ENCODE measurements at regions of chr19 and their contacts with region 1.

Region 1: DNA sequence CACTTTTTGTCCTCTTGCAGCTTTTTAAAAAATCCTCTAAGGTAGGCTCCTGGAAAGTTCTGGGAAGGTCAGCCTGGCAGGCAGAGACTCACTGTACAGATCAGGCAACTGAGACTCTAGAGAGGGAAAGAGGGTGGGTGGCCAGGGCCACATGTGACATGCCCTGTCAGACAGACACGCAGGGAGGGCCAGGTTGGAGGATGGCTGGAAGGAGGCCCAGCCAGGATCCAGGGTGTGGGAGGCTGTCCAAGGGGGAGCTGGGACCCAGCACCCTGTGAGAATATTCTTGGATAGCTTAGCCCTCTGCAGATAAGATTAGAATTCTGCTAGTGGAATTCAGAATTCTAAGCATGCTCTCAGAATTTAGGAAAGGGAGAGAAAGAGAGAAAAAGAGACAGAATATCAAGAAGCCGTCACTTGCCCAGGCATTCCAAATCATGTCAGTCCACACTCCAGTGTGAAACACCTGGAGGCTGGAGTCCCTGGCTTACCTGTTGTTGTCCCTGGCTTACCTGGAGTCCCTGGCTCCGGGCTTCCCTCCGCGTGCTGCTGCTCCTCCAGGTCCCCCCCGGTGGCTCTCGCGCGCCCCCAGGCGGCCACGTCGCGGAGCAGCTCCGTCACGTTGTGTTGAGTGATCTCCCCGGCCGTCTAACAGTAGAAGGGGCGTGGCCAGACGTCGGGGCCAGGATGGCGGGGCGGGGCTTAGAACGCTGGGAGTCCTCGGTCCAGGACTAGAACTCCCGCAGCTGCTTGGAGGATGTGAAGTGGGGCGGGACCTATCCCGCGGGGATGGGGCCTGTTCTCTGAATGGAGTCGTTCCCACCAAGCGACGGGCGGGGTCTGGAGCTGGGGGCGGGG is 2.8 kb upstream of the TNNI3 start:
- DNase-seq: peak; percentile 92
- ATAC-seq: peak; percentile 77
- H3K4me3 ChIP-seq: peak overlapping the region; percentile 67 to 74
- H3K27ac ChIP-seq: peak overlapping the region; percentile 78
- H3K4me1 ChIP-seq: peaks cover 13 to 53% of the 10 kb centered on the region in 2 experiments
- H3K27me3 ChIP-seq: no peaks in the 10 kb centered on the region
- CTCF ChIP-seq: peak; percentile 89 to 97 (median 96)
- POLR2A ChIP-seq: no peak
- RAD21 ChIP-seq: peak; percentile 94

Region 2: GRCh38 chr19:54893406-54893805 is 267.0 kb before region 1 on chr19:
- CTCF ChIA-PET with region 1: no interaction called
- POLR2A ChIA-PET with region 1: no interaction called
- RAD21 ChIA-PET with region 1: no interaction called
- intact Hi-C with region 1: no loop called
- DNase-seq: no peak
- ATAC-seq: peak; percentile 44; the same call in 1 of the 2 replicates
- H3K4me3 ChIP-seq: no peak overlapping the region
- H3K27ac ChIP-seq: no peak overlapping the region
- H3K4me1 ChIP-seq: peaks cover 4 to 8% of the 10 kb centered on the region in 2 experiments; a peak in 3 of 4 replicates
- H3K27me3 ChIP-seq: no peaks in the 10 kb centered on the region
- CTCF ChIP-seq: no peak
- POLR2A ChIP-seq: no peak
- RAD21 ChIP-seq: no peak

Region 3: GRCh38 chr19:55014717-55015116 is 145.6 kb before region 1 on chr19:
- CTCF ChIA-PET with region 1: no interaction called
- POLR2A ChIA-PET with region 1: no interaction called
- RAD21 ChIA-PET with region 1: no interaction called
- intact Hi-C with region 1: no loop called
- DNase-seq: no peak
- ATAC-seq: no peak
- H3K4me3 ChIP-seq: no peak overlapping the region
- H3K27ac ChIP-seq: no peak overlapping the region
- H3K4me1 ChIP-seq: no peaks in the 10 kb centered on the region
- H3K27me3 ChIP-seq: no peaks in the 10 kb centered on the region
- CTCF ChIP-seq: no peak
- POLR2A ChIP-seq: no peak
- RAD21 ChIP-seq: no peak

Region 4: DNA sequence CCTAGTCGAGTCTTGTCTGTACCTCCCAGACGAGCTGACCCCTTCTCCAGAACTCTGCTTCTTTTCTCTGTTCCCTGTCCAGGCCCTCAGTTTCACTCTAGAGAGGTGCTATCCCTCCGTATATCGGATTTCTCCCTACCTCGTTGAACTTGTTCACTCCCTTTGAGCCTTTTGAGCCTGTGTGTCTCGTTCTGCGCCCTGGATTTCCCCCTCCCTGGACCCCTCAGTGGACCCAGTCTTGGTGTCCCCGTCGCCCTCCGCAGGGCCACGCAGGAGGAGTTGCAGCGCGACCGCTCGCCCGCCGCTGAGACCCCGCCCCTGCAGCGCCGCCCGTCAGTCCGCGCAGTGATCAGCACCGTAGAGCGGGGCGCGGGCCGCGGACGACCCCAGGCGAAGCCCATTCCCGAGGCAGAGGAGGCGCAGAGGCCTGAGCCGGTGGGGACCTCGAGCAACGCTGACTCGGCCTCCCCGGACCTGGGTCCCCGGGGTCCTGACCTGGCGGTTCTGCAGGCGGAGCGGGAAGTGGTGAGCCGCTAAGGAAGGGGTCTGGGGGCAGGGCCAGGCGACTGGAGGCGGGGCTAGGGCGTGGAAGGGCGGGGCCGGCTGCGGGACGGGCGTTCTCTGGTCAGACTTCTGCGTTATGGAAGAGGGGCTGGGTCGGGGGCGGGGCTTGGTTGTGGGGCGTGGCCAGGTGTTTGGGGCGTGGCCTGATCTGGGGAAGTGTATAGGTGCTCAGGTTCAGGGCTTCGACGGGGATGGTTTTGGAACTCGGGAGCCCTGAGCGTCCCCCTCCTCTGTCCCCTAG is 79.2 kb before region 1 on chr19:
- CTCF ChIA-PET with region 1: no interaction called
- POLR2A ChIA-PET with region 1: no interaction called
- RAD21 ChIA-PET with region 1: no interaction called
- intact Hi-C with region 1: loop called (anchors 5 kb)
- DNase-seq: peak; percentile 86
- ATAC-seq: peak; percentile 77
- H3K4me3 ChIP-seq: peak overlapping the region; percentile 63 to 69
- H3K27ac ChIP-seq: peak overlapping the region; percentile 92
- H3K4me1 ChIP-seq: peaks cover 8 to 45% of the 10 kb centered on the region in 2 experiments
- H3K27me3 ChIP-seq: no peaks in the 10 kb centered on the region
- CTCF ChIP-seq: no peak
- POLR2A ChIP-seq: no peak
- RAD21 ChIP-seq: no peak

Region 5: GRCh38 chr19:55088543-55089341 is 71.6 kb before region 1 on chr19:
- CTCF ChIA-PET with region 1: interaction called, 11 read pairs
- POLR2A ChIA-PET with region 1: no interaction called
- RAD21 ChIA-PET with region 1: no interaction called
- intact Hi-C with region 1: loop called (anchors 5 kb)
- DNase-seq: no peak
- ATAC-seq: peak; percentile 74
- H3K4me3 ChIP-seq: no peak overlapping the region
- H3K27ac ChIP-seq: peak overlapping the region; percentile 28; the same call in 1 of the 2 replicates
- H3K4me1 ChIP-seq: peaks cover 0 to 3% of the 10 kb centered on the region in 2 experiments; a peak in 1 of 4 replicates
- H3K27me3 ChIP-seq: no peaks in the 10 kb centered on the region
- CTCF ChIP-seq: peak in 2 of 3 experiments; percentile 54 to 70; a peak in 4 of 6 replicates
- POLR2A ChIP-seq: no peak
- RAD21 ChIP-seq: no peak

Region 6: GRCh38 chr19:55109527-55110291 is 50.6 kb before region 1 on chr19:
- CTCF ChIA-PET with region 1: no interaction called
- POLR2A ChIA-PET with region 1: no interaction called
- RAD21 ChIA-PET with region 1: no interaction called
- intact Hi-C with region 1: no loop called
- DNase-seq: no peak
- ATAC-seq: peak; percentile 33; the same call in 1 of the 2 replicates
- H3K4me3 ChIP-seq: no peak overlapping the region
- H3K27ac ChIP-seq: no peak overlapping the region
- H3K4me1 ChIP-seq: peaks cover 0 to 3% of the 10 kb centered on the region in 2 experiments; a peak in 1 of 4 replicates
- H3K27me3 ChIP-seq: no peaks in the 10 kb centered on the region
- CTCF ChIP-seq: no peak
- POLR2A ChIP-seq: no peak
- RAD21 ChIP-seq: no peak